Mucosa of descending colon (tissue), 3 donors: ENCODE measurements at regions of chr12 and their contacts with region 1.

Region 1: DNA sequence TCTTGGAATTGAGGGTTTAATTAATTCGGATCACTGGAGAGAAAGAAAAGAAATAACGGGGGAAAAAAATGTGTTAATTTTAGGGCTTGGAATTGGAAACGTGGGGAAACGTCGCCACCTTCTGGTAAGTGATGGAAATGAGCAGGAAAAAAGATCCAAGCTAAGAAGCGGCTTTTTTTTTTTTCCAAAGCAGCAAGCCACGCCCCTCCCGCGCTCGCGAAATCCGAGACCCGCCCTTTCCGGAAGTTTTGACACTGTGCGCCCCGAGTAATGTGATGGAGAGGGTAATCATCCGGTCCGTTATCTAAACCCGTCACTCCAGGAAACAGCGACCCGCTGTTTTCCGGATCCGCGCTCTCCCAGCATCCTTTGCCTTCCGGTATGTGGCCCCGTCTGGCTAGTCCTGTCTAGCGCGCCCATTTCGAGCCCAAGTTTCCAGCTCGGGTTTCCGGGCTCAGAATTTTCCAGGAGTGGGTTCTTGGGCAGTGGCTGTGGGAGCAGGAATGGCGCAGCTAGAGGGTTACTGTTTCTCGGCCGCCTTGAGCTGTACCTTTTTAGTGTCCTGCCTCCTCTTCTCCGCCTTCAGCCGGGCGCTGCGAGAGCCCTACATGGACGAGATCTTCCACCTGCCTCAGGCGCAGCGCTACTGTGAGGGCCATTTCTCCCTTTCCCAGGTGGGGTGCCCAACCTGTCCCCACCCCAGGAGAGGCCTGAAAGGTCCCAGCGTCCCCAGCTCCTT is at the start of gene ALG10B:
- DNase-seq: peak; percentile 92 to 94 (median 93)
- ATAC-seq: peak; percentile 100
- H3K4me3 ChIP-seq: peak within 1 kb of the TSS; percentile 30
- H3K4me1 ChIP-seq: no peaks in the 10 kb centered on the region
- CTCF ChIP-seq: peak; percentile 33
- total RNA-seq, gene ALG10B: 4.3 to 6.3 (median 4.6) TPM

Region 2: DNA sequence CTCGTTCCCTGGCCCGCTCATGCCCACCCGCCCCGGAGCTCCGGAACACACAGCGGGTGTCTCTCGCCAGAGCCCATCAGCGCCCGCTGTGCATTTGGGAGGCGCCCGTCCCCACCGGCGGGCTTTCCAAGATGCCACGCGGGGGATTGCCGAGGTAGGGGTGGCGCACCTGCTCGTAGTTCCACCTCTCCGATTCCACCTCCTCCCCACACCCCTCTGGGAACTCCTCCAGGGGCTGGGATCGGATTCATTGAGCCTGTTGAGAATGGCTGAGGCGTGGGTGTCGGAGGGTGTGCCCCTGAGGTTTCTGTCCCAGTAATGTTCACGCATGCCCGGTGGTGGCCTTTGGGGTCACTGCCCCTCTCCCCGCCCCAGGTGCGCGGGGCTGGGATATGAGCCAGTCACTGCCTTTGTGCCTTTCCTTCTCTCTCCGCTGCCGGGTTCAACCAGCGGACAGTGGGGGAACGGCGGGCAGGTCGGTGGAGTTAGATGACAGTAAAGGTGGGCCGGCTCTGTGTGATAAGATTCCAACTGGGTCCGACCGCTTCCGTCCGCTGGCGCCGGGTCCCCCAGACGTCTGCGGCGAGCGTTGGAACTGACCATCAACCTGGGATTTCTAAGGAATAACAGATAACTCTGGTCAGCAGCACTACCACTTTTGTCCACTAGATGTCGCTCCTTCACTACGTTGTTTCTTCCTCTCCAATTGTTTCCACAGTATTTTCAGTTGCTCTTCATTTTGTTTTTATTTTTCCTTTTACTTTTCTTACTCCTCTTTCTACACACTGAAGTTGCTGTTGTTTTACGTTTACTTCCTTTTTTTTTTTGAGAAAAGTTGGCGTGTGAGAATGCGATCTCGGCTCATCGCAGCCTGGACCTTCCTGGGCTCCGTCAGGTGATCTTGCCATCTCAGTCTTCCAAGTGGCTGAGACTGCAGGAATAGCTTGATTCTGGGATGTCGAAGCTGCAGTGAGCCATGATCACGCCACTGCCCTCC is 178.0 kb before region 1 on chr12:
- intact Hi-C with region 1: loop called (anchors 5 to 10 kb)
- DNase-seq: peak; percentile 32 to 89 (median 51)
- ATAC-seq: peak; percentile 90
- H3K4me3 ChIP-seq: no peak overlapping the region
- H3K4me1 ChIP-seq: peaks cover 7% of the 10 kb centered on the region
- CTCF ChIP-seq: peak; percentile 85

Region 3: GRCh38 chr12:38823739-38824138 is 507.2 kb after region 1 on chr12:
- intact Hi-C with region 1: no loop called
- DNase-seq: no peak
- ATAC-seq: no peak
- H3K4me3 ChIP-seq: no peak overlapping the region
- H3K4me1 ChIP-seq: no peaks in the 10 kb centered on the region
- CTCF ChIP-seq: no peak